ENCODE measurements at regions of chr4 and their contacts with region 1.

Region 1: GRCh38 chr4:120902925-120903324 is 19.6 kb downstream of the PRDM5 start:
- DNase-seq: no peak
- H3K4me3 ChIP-seq: no peak overlapping the region
- H3K27ac ChIP-seq: no peak overlapping the region
- H3K4me1 ChIP-seq: no peaks in the 10 kb centered on the region
- H3K27me3 ChIP-seq: no peaks in the 10 kb centered on the region
- CTCF ChIP-seq: no peak

Region 2: GRCh38 chr4:119646347-119647071 is 1256.4 kb before region 1 on chr4:
- CTCF ChIA-PET with region 1: no interaction called
- dilution Hi-C with region 1: no loop called
- in situ Hi-C with region 1: no loop called
- intact Hi-C with region 1: loop called (anchors 10 kb)
- DNase-seq: no peak
- H3K4me3 ChIP-seq: no peak overlapping the region
- H3K27ac ChIP-seq: no peak overlapping the region
- H3K4me1 ChIP-seq: no peaks in the 10 kb centered on the region
- H3K27me3 ChIP-seq: no peaks in the 10 kb centered on the region
- CTCF ChIP-seq: no peak

Region 3: DNA sequence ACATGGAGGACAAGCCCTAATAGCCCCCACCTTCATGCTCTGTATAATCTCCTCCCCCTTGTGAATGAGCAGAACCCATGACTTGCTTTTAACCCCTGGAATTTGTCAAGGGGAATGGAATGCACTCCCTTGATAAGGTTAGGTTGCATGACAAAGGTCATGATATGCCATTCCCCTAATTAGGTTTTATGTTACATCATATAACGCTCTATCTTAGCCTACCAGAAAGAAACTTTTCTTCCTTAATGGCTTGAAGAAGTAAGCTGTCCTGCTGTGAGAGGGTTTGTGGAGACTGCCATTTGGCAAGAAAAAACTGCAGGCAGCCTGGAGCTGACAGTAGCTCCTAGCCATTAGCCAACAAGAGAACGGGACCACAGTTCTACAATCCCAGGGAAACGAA is 436.5 kb before region 1 on chr4:
- CTCF ChIA-PET with region 1: no interaction called
- dilution Hi-C with region 1: no loop called
- in situ Hi-C with region 1: no loop called
- intact Hi-C with region 1: no loop called
- DNase-seq: no peak
- H3K4me3 ChIP-seq: no peak overlapping the region
- H3K27ac ChIP-seq: no peak overlapping the region
- H3K4me1 ChIP-seq: no peaks in the 10 kb centered on the region
- H3K27me3 ChIP-seq: no peaks in the 10 kb centered on the region
- CTCF ChIP-seq: no peak

Measured in mammary epithelial cell (primary cell).